ENCODE measurements at regions of chr1 and their contacts with region 1.

Region 1: DNA sequence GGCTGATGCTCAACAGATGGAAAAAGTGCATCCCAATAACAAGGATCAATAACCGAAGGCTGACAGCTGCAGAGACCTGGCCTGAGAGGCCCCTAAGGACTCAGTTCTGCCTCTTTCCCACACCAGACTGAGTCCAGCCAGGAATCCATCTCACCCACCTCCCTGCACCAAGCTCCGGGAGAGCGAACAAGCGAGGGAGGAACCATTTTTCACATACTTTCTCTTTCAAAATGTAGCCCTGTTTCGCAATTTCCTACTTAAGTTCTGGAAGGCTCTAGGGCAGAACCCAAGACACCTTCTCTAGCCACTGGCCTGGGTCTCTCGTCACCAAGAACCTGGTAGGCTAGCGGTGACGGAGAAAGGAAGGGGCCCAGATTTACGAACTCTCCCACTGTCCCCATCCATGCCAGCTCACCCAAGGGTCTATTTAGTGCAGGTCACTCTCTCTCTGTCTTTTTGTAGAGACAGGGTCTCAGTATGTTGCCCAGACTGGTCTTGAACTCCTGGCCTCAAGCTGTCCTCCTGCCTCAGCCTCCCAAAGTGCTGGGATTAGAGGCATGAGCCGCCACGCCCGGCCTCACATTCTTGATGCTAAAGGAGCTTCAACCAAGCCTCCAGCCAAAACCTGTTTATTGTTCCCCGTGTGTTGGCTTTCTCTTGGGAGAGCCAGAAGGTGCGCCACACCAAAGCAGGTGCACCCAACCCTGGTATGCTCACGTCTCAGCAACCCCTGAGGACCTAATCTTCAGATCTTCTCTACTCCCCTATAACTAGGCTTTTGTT is 10.9 kb upstream of the GNL2 start:
- DNase-seq: peak; percentile 52 to 60
- H3K4me3 ChIP-seq: no peak overlapping the region
- H3K27ac ChIP-seq: peak overlapping the region; percentile 81 to 87
- H3K4me1 ChIP-seq: peaks cover 6 to 18% of the 10 kb centered on the region in 2 donors
- H3K27me3 ChIP-seq: no peaks in the 10 kb centered on the region
- CTCF ChIP-seq: no peak
- POLR2A ChIP-seq: no peak

Region 2: DNA sequence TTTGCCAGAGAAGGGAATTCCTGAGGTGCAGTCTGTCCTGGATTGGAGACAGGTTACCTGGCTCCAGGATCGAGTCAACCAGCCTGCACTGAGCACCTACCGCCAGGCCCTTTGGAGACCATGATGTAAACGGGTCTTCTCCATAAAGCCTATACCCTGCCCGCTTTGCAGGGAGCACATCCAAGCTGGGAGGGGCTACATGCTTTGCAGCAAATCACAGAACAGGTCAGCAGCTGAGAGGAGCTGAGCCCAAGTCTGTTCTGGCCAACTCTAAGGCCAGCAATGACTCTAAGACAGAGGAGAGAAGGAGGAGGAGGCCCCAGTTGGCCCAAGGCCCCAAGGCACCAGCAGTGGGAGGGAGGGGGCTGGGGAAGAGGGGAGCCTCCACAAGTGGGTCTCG is 43.5 kb after region 1 on chr1:
- intact Hi-C with region 1: no loop called
- DNase-seq: no peak
- H3K4me3 ChIP-seq: no peak overlapping the region
- H3K27ac ChIP-seq: no peak overlapping the region
- H3K4me1 ChIP-seq: no peaks in the 10 kb centered on the region
- H3K27me3 ChIP-seq: no peaks in the 10 kb centered on the region
- CTCF ChIP-seq: no peak
- POLR2A ChIP-seq: no peak

Region 3: GRCh38 chr1:37676281-37677243 is 69.9 kb after region 1 on chr1:
- intact Hi-C with region 1: loop called (anchors 5 kb)
- DNase-seq: peak; percentile 84 to 85
- H3K4me3 ChIP-seq: no peak overlapping the region
- H3K27ac ChIP-seq: peak overlapping the region; percentile 84 to 87
- H3K4me1 ChIP-seq: peaks cover 15 to 21% of the 10 kb centered on the region in 2 donors
- H3K27me3 ChIP-seq: no peaks in the 10 kb centered on the region
- CTCF ChIP-seq: peak in 2 of 4 experiments; percentile 24 to 28
- POLR2A ChIP-seq: no peak